Sciatic nerve (tissue), 2 donors: ENCODE measurements at regions of chr1 and their contacts with region 1.

Region 1: GRCh38 chr1:62508187-62508758 is 71.4 kb downstream of the USP1 start:
- DNase-seq: no peak
- ATAC-seq: no peak

Region 2: GRCh38 chr1:62746085-62746808 is 238.0 kb after region 1 on chr1:
- intact Hi-C with region 1: loop called (anchors 10 kb)
- DNase-seq: no peak
- ATAC-seq: peak; percentile 83